ENCODE measurements at regions of chr20 and their contacts with region 1.

Region 1: DNA sequence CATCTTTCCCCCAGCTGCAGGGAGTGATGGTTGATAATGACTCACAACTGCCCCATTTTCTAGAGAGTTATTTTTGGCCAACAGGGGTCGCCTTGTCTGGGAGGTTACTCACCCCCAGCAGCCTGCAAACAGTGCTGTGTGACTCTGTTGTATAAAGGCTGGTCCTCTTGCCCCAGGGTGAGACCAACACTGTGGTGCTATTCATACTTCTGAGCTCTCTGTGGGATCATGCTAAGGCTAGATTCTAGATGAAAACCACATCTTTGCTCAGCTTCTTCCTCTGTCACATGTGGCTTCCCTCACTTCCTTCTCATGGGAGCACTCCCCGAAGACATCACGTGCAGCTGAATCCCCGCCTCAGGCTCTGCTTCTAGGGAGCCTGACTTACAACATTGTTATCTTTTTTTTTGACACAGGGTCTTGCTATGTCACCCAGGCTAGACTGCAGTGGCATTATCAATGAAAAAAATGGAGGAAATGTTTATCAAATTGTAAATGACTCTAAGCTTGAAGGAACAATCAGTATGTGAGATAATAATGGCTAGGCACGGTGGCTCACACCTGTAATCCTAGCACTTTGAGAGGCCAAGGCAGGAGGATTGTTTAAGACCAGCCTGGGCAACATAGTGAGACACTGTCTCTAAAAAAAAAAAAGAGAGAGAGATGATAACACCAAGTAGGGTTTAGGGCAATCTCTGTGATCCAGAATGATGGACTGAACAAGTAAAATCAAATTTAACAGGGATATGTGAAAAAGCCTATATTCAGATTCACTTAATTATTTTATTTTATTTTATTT is 55.7 kb upstream of the SLC23A2 start:
- DNase-seq: peak; percentile 43
- H3K4me3 Mint-ChIP-seq: no peak overlapping the region
- H3K27ac Mint-ChIP-seq: no peak overlapping the region
- H3K4me1 Mint-ChIP-seq: peaks cover 10% of the 10 kb centered on the region
- H3K27me3 Mint-ChIP-seq: no peaks in the 10 kb centered on the region
- CTCF ChIP-seq: peak; percentile 54

Region 2: DNA sequence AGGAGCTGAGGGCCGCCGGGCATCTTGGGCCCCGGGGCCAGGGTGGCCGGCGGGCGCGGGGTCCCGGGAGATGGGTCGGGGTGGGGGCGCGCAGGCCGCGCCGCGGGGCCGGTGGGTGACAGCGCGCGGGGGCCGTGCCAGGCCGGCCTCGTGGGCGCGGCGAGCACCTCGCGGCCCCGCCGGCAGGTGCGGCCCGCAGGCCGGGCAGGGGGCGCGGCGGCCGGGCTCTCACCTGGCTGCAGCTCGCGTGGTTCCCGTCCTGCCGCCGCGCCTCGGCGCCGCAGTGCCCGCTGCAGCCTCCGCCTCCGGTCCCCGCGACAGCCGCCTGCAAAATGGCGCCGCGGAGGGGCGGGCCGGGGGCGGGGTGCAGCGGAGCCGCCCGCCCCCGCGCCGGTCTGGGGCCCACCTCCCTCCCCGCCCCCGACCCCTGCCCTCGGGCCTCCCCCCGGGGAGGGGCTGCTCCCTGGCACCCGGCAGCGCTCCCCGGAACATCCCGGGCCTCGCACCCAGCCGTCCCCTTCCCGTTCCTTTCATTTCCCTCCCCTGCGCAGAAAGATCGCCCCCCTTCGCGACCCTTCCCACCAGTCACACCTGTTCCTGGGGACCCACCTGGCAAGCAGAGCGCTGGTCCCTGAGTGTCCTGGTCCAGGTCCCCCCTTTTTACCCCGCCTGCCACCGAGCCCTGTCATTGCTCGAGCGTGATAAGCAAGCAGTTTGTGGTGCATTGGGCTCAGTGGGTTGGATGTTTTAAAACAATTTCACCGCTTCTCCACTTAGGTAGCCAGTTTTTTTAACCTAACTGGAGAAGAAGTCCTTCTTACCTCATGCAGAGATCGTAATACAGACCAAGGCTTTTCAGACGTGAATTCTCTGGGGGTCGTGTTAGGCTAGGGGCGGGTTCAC is 55.6 kb before region 1 on chr20 and contains the start of gene SLC23A2:
- CTCF ChIA-PET with region 1: no interaction called
- intact Hi-C with region 1: no loop called
- DNase-seq: peak; percentile 51
- H3K4me3 Mint-ChIP-seq: peak within 1 kb of the TSS; percentile 82
- H3K27ac Mint-ChIP-seq: no peak within 1 kb of the TSS
- H3K4me1 Mint-ChIP-seq: peaks cover 8% of the 10 kb centered on the region
- H3K27me3 Mint-ChIP-seq: no peaks in the 10 kb centered on the region
- CTCF ChIP-seq: no peak
- total RNA-seq, gene SLC23A2: 13.2 and 14.8 TPM in 2 replicates

Region 3: GRCh38 chr20:5100684-5101347 is 43.8 kb after region 1 on chr20:
- CTCF ChIA-PET with region 1: interaction called, 6 read pairs
- intact Hi-C with region 1: loop called (anchors 10 kb)
- DNase-seq: peak; percentile 67
- H3K4me3 Mint-ChIP-seq: no peak overlapping the region
- H3K27ac Mint-ChIP-seq: no peak overlapping the region
- H3K4me1 Mint-ChIP-seq: no peaks in the 10 kb centered on the region
- H3K27me3 Mint-ChIP-seq: no peaks in the 10 kb centered on the region
- CTCF ChIP-seq: peak; percentile 71

Measured in Calu3 (cell line).